Activated CD4-positive, alpha-beta T cell treated with anti-CD3 and anti-CD28 coated beads, Interleukin-2, amount 10 ng/mL, durations not matched to agents 24 days and 14 days (primary cell): ENCODE measurements at regions of chr1 and their contacts with region 1.

Region 1: GRCh38 chr1:111441573-111442192 is 7.4 kb downstream of the WDR77 start:
- DNase-seq: peak; percentile 87
- H3K4me3 Mint-ChIP-seq: no peak overlapping the region
- H3K27ac Mint-ChIP-seq: no peak overlapping the region
- H3K4me1 Mint-ChIP-seq: peaks cover 26% of the 10 kb centered on the region
- H3K27me3 Mint-ChIP-seq: no peaks in the 10 kb centered on the region

Region 2: GRCh38 chr1:111463029-111463683 is 21.5 kb after region 1 on chr1:
- intact Hi-C with region 1: loop called (anchors 2 kb)
- DNase-seq: no peak
- H3K4me3 Mint-ChIP-seq: no peak overlapping the region
- H3K27ac Mint-ChIP-seq: no peak overlapping the region
- H3K4me1 Mint-ChIP-seq: peaks cover 11% of the 10 kb centered on the region
- H3K27me3 Mint-ChIP-seq: no peaks in the 10 kb centered on the region

Region 3: GRCh38 chr1:111474106-111474505 is 32.4 kb after region 1 on chr1:
- intact Hi-C with region 1: no loop called
- DNase-seq: no peak
- H3K4me3 Mint-ChIP-seq: peak overlapping the region; percentile 77
- H3K27ac Mint-ChIP-seq: peak overlapping the region; percentile 73
- H3K4me1 Mint-ChIP-seq: peaks cover 48% of the 10 kb centered on the region
- H3K27me3 Mint-ChIP-seq: peaks cover 3% of the 10 kb centered on the region